Posterior vena cava (tissue), 2 donors: ENCODE measurements at regions of chr1 and their contacts with region 1.

Region 1: DNA sequence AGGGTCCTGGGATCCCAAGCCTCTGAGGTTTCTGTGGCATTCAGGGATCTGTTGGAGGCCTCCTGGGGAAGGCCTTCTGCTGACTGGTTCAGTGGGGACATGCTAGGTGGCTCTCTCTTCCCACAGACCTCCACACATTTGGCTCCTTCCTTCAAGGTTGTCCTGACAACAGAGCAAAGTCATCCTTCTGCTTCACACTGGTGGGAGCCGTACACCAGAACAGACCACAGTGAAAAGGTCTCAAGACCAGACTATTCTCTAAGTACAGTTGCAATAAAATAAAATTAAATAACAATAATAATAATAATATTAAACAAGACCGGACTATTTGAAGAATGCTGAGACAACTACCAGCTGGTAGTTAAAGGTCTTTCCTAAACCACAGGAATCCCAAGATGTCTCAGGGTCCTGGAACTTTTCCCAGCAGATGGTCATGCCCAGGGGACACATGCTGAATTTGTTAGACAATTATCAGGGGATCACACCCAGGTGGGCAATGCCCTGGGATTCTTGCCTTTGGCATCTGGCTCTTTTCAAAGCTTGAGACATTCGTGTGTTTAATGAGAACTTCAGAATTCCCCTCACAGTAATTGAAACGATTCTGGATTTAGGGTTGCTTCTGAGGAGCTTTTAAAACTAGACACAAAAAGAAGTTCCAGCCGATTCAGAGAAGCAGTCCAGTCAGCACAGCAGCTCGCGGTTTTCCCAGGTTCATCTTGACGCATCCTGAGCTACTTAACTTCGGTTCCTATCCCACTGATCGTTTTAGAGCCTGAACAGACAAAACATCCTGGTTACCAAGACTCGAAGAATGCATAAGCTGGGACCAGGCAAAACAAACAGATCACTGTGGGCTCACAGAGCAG is 22.9 kb downstream of the HTR1D start:
- DNase-seq: no peak

Region 2: GRCh38 chr1:21206117-21206516 is 1988.2 kb before region 1 on chr1:
- intact Hi-C with region 1: loop called in 1 of 2 experiments (anchors 5 kb)
- DNase-seq: no peak

Region 3: DNA sequence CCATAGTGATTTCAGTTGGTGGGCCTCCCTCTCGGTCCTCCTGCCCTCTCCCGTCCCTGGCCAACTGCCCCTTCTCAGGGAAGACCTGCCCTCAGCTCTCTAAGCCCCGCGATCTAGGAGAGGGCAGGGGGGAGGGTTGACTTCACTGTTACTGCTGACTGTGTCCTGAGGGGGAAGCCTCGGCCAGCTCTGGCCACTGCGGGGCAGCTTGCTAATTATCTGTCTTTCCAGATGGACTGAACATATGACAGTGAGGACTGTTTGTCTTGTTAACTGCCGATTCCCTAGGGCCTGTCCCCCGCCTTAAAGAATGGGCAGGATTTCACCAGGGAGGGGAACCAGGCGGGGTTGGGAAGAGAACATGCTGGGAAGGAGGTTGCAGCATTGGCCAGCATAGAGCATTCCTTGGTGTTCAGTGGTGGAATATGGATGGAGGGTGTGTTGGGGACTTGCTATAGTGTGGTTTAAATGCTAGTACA is 1244.1 kb after region 1 on chr1:
- intact Hi-C with region 1: no loop called
- DNase-seq: no peak